HEK293 (cell line): ENCODE measurements at regions of chr11 and their contacts with region 1.

Region 1: GRCh38 chr11:12331239-12331874 is 46.0 kb upstream of the PARVA start:
- H3K4me3 ChIP-seq: no peak overlapping the region
- H3K27ac ChIP-seq: no peak overlapping the region
- H3K4me1 ChIP-seq: no peaks in the 10 kb centered on the region
- CTCF ChIP-seq: peak; percentile 55

Region 2: GRCh38 chr11:12318791-12319438 is 12.4 kb before region 1 on chr11:
- CTCF ChIA-PET with region 1: interaction called, 24 read pairs
- POLR2A ChIA-PET with region 1: no interaction called
- H3K4me3 ChIP-seq: no peak overlapping the region
- H3K27ac ChIP-seq: peak overlapping the region; percentile 0; the same call in 1 of the 2 replicates
- H3K4me1 ChIP-seq: 0 out of 2 replicates have a peak, but pooled peaks cover 10% of the 10 kb centered on the region
- CTCF ChIP-seq: no peak

Region 3: GRCh38 chr11:12343526-12343925 is 12.2 kb after region 1 on chr11:
- CTCF ChIA-PET with region 1: interaction called, 12 read pairs
- POLR2A ChIA-PET with region 1: no interaction called
- H3K4me3 ChIP-seq: no peak overlapping the region
- H3K27ac ChIP-seq: no peak overlapping the region
- H3K4me1 ChIP-seq: no peaks in the 10 kb centered on the region
- CTCF ChIP-seq: no peak

Region 4: GRCh38 chr11:12888525-12889158 is 557.3 kb after region 1 on chr11:
- CTCF ChIA-PET with region 1: interaction called, 49 read pairs
- POLR2A ChIA-PET with region 1: no interaction called
- H3K4me3 ChIP-seq: no peak overlapping the region
- H3K27ac ChIP-seq: no peak overlapping the region
- H3K4me1 ChIP-seq: no peaks in the 10 kb centered on the region
- CTCF ChIP-seq: peak; percentile 46; the same call in 1 of the 2 replicates

Region 5: GRCh38 chr11:12893787-12894672 is 562.7 kb after region 1 on chr11:
- CTCF ChIA-PET with region 1: interaction called, 49 read pairs
- POLR2A ChIA-PET with region 1: no interaction called
- H3K4me3 ChIP-seq: no peak overlapping the region
- H3K27ac ChIP-seq: no peak overlapping the region
- H3K4me1 ChIP-seq: no peaks in the 10 kb centered on the region
- CTCF ChIP-seq: no peak